Heart left ventricle (tissue), 16 donors: ENCODE measurements at regions of chr17 and their contacts with region 1.

Region 1: GRCh38 chr17:879549-880442 is 97.6 kb downstream of the MRM3 start:
- DNase-seq: peak; percentile 80 to 88 (median 85)
- ATAC-seq: peak; percentile 33 to 77 (median 66)
- H3K4me3 ChIP-seq: peak overlapping the region in 2 of 12 donors; percentile 2
- H3K27ac ChIP-seq: peak overlapping the region; percentile 61 to 90 (median 82)
- H3K4me1 ChIP-seq: peaks cover 8 to 61% (median 47%) of the 10 kb centered on the region in 12 donors
- H3K27me3 ChIP-seq: no peaks in the 10 kb centered on the region
- CTCF ChIP-seq: peak; percentile 35 to 75 (median 66)
- POLR2A ChIP-seq: peak in 1 of 2 donors; percentile 21

Region 2: DNA sequence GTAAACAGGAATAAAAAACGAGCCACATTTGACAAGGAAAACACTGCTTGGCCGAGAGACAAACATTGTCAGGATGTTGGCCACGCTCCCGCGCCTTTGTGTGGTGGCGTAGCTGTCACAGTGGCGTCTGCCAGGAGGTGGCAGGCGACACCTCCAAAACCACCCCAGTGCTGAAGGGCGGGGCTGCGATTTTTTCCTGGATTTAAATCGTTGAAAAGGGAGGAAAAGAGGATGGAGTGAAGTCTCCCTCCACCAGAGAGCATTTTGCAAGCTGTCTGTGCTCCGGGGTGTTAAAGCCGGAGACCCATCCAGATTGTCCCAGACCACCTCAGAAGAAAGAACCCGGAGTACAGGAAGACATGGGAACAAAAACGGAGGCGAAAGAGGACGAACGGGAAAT is 84.9 kb before region 1 on chr17:
- intact Hi-C with region 1: loop called in 2 of 10 experiments (anchors 2 to 5 kb)
- DNase-seq: peak; percentile 85 to 91 (median 88)
- ATAC-seq: peak; percentile 47 to 81 (median 63)
- H3K4me3 ChIP-seq: peak overlapping the region in 11 of 12 donors; percentile 14 to 55 (median 43)
- H3K27ac ChIP-seq: peak overlapping the region in 10 of 12 donors; percentile 4 to 74 (median 51)
- H3K4me1 ChIP-seq: peaks cover 0 to 30% (median 10%) of the 10 kb centered on the region in 12 donors
- H3K27me3 ChIP-seq: no peaks in the 10 kb centered on the region
- CTCF ChIP-seq: peak; percentile 73 to 97 (median 89)
- POLR2A ChIP-seq: no peak

Region 3: GRCh38 chr17:850851-851763 is 28.7 kb before region 1 on chr17:
- intact Hi-C with region 1: loop called in 2 of 10 experiments (anchors 1 to 5 kb)
- DNase-seq: peak in 4 of 5 donors; percentile 33 to 53 (median 40)
- ATAC-seq: peak in 3 of 4 donors; percentile 43 to 64 (median 46)
- H3K4me3 ChIP-seq: peak overlapping the region in 8 of 12 donors; percentile 16 to 37 (median 22)
- H3K27ac ChIP-seq: peak overlapping the region; percentile 29 to 86 (median 56)
- H3K4me1 ChIP-seq: peaks cover 0 to 54% (median 24%) of the 10 kb centered on the region in 12 donors
- H3K27me3 ChIP-seq: no peaks in the 10 kb centered on the region
- CTCF ChIP-seq: no peak
- POLR2A ChIP-seq: no peak

Region 4: DNA sequence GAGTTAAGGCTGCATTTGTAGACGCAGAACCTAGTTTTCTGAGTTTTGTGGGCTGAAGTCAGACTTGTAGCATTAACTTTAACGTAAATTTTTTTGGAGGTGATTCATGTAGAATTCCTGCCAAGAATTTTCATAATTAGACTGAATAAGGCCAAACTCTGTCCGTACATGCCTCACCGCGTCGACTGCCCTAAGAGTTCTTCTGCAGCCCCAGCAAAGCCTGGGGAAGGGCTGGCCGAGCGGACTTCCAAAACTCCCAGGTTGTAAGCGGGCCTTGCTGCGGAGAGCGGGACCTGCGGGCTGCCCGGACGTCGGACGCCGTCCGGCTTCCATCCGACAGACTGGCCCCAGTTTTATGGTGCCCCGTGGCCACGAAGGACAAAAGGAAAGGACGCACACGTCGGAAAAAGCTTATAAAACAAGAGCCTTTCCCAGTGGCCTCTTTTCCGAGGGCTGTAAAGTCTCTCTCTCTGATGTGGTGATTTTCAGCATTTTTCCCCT is 24.2 kb after region 1 on chr17:
- intact Hi-C with region 1: loop called in 1 of 10 experiments (anchors 1 kb)
- DNase-seq: no peak
- ATAC-seq: no peak
- H3K4me3 ChIP-seq: no peak overlapping the region
- H3K27ac ChIP-seq: peak overlapping the region in 1 of 12 donors; percentile 87
- H3K4me1 ChIP-seq: peaks cover 0 to 28% (median 21%) of the 10 kb centered on the region in 12 donors
- H3K27me3 ChIP-seq: no peaks in the 10 kb centered on the region
- CTCF ChIP-seq: no peak
- POLR2A ChIP-seq: no peak

Region 5: GRCh38 chr17:915538-916201 is 35.9 kb after region 1 on chr17:
- intact Hi-C with region 1: loop called in 3 of 10 experiments (anchors 1 to 5 kb)
- DNase-seq: peak in 4 of 5 donors; percentile 61 to 76 (median 66)
- ATAC-seq: peak; percentile 54 to 83 (median 68)
- H3K4me3 ChIP-seq: peak overlapping the region in 4 of 12 donors; percentile 1 to 34 (median 14)
- H3K27ac ChIP-seq: peak overlapping the region; percentile 46 to 90 (median 78)
- H3K4me1 ChIP-seq: peaks cover 0 to 32% (median 19%) of the 10 kb centered on the region in 12 donors
- H3K27me3 ChIP-seq: no peaks in the 10 kb centered on the region
- CTCF ChIP-seq: no peak
- POLR2A ChIP-seq: no peak

Region 6: DNA sequence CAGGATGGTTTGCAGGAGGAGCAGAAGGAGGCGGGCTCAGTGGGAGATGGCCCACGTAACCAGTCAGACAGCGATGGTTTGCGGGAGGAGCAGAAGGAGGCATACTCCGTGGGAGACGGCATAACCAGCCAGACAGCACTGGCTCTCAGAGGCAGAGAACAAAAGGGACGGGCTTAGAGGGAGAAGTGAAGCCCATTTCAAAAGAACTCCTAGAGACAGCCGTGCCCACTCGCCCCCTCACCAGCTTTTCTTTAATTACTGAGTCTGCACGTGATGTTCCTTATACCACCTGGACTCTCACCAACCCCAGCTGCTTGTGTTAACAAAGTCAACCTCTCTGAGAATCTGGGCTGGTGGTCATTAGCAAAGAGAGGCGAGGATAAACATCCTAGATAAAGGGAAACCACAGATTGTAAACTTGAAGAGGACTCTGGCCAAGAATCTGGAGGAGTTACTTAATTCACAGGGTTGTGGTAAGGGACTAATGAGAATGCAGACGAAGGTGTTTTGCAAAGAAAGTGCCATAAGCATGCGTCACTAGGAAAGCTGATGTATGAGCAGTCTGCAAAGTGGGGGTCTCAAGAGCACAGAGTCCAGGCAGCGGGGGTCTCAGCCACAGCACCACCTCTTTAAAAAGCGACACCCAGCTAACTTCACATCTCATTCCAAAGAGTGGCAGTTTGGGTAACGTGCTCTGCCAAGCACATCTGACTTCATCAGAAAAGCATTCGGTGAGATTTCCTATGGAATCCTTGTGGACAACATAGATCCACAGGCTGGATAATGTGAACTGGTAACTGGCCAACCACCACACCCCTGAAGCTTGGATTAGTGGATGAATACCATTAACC is 48.0 kb after region 1 on chr17:
- intact Hi-C with region 1: no loop called
- DNase-seq: no peak
- ATAC-seq: peak in 2 of 4 donors; percentile 13 to 46
- H3K4me3 ChIP-seq: no peak overlapping the region
- H3K27ac ChIP-seq: peak overlapping the region in 1 of 12 donors; percentile 65
- H3K4me1 ChIP-seq: peaks cover 0 to 19% (median under 1%) of the 10 kb centered on the region in 12 donors
- H3K27me3 ChIP-seq: no peaks in the 10 kb centered on the region
- CTCF ChIP-seq: no peak
- POLR2A ChIP-seq: no peak

Region 7: GRCh38 chr17:1039511-1040215 is 159.9 kb after region 1 on chr17:
- intact Hi-C with region 1: loop called in 1 of 10 experiments (anchors 10 kb)
- DNase-seq: peak; percentile 83 to 92 (median 90)
- ATAC-seq: peak; percentile 51 to 78 (median 72)
- H3K4me3 ChIP-seq: peak overlapping the region in 9 of 12 donors; percentile 20 to 41 (median 27)
- H3K27ac ChIP-seq: peak overlapping the region; percentile 78 to 96 (median 86)
- H3K4me1 ChIP-seq: peaks cover 7 to 79% (median 51%) of the 10 kb centered on the region in 12 donors
- H3K27me3 ChIP-seq: no peaks in the 10 kb centered on the region
- CTCF ChIP-seq: peak in 1 of 12 donors; percentile 8
- POLR2A ChIP-seq: peak in 1 of 2 donors; percentile 15

Region 8: DNA sequence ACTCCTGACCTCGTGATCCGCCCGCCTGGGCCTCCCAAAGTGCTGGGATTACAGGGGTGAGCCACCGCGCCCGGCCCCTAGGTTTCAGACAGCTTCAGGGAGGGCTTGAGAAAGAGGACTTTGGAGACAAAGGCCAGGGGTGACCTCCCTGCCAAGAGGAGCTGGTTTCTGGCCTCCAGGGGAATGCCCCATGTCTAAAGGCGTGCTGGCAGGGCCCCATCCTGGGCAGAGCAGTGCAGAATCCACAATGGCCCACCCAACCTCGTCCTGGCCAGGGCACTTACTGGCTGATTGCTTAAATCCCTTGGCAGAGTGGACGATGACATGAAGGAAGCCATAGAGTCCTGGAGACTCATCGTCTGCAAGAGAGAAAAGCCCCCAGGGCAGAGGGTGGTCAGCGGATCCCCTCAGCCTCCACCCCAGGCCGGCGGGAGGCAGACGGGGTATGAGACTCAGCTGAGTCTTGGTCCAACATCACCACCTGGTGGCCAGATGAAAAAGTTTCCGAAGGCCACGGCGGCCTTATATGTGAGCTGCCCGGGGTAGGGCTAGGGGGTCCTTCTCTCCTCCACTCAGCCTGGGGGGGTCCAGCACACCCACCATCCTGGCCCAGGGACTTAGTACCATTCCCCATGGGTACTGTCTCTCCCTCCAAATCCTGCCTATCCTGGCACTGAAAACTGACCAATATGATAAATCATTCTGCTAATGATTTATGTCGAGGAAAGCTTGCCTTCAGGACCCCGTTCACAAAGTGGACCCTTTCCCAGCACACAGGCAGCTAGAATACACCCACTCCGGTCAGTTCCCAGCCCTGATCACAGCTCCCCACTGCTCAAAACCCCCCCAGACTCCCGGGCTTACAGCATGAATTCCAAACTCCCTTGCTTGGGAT is 176.2 kb after region 1 on chr17:
- intact Hi-C with region 1: loop called in 2 of 10 experiments (anchors 10 kb)
- DNase-seq: peak; percentile 64 to 81 (median 76)
- ATAC-seq: peak; percentile 64 to 80 (median 70)
- H3K4me3 ChIP-seq: no peak overlapping the region
- H3K27ac ChIP-seq: peak overlapping the region in 5 of 12 donors; percentile 19 to 58 (median 43)
- H3K4me1 ChIP-seq: peaks cover 0 to 25% (median 8%) of the 10 kb centered on the region in 12 donors
- H3K27me3 ChIP-seq: no peaks in the 10 kb centered on the region
- CTCF ChIP-seq: peak; percentile 68 to 83 (median 80)
- POLR2A ChIP-seq: no peak